H1 (cell line): ENCODE measurements at regions of chr3 and their contacts with region 1.

Region 1: GRCh38 chr3:132161608-132162007 is 126.8 kb upstream of the CPNE4 start:
- DNase-seq: peak in 1 of 2 experiments; percentile 7
- H3K4me3 ChIP-seq: no peak overlapping the region
- H3K27ac ChIP-seq: no peak overlapping the region
- H3K4me1 ChIP-seq: no peaks in the 10 kb centered on the region
- H3K27me3 ChIP-seq: no peaks in the 10 kb centered on the region
- CTCF ChIP-seq: peak in 2 of 3 experiments; percentile 28 to 50; a peak in 3 of 4 replicates
- EP300 ChIP-seq: no peak
- POLR2A ChIP-seq: no peak
- RAD21 ChIP-seq: peak in 1 of 2 experiments; percentile 37; a peak in 1 of 4 replicates

Region 2: GRCh38 chr3:131944676-131945075 is 216.9 kb before region 1 on chr3:
- CTCF ChIA-PET with region 1: no interaction called
- POLR2A ChIA-PET with region 1: no interaction called
- DNase-seq: no peak
- H3K4me3 ChIP-seq: no peak overlapping the region
- H3K27ac ChIP-seq: no peak overlapping the region
- H3K4me1 ChIP-seq: peaks cover 0 to 4% (median 0%) of the 10 kb centered on the region in 4 experiments; a peak in 1 of 7 replicates
- H3K27me3 ChIP-seq: no peaks in the 10 kb centered on the region
- CTCF ChIP-seq: no peak
- EP300 ChIP-seq: no peak
- POLR2A ChIP-seq: no peak
- RAD21 ChIP-seq: no peak

Region 3: DNA sequence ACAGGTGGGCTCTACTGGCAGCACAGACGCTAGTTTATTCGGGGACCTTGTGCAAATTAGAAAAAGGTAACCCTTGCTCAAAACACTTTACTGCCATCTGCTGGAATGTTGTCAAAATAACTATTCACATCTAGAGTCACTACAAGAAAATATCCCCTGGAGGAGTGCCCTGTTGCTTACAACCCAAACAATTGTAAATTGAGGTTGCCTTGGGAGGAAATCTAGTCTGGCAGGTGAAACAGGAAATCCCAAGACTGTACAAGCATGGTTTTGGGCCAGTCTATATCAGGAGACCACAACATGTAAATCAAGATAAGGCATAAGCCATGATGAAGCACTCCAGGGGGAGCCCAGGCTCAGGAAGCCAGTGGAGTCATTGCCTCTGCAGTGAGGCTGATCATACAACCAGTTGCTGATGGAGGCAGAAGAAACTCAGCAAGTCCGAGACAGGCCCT is 18.8 kb after region 1 on chr3:
- CTCF ChIA-PET with region 1: interaction called, 10 read pairs
- POLR2A ChIA-PET with region 1: no interaction called
- DNase-seq: peak; percentile 5 to 47
- H3K4me3 ChIP-seq: no peak overlapping the region
- H3K27ac ChIP-seq: no peak overlapping the region
- H3K4me1 ChIP-seq: peaks cover 0 to 3% (median 2%) of the 10 kb centered on the region in 4 experiments; a peak in 2 of 7 replicates
- H3K27me3 ChIP-seq: no peaks in the 10 kb centered on the region; a peak in 1 of 7 replicates
- CTCF ChIP-seq: peak in 2 of 3 experiments; percentile 61 to 69; a peak in 3 of 4 replicates
- EP300 ChIP-seq: no peak
- POLR2A ChIP-seq: no peak
- RAD21 ChIP-seq: peak; percentile 85 to 91